ENCODE measurements at regions of chr1 and their contacts with region 1.

Region 1: DNA sequence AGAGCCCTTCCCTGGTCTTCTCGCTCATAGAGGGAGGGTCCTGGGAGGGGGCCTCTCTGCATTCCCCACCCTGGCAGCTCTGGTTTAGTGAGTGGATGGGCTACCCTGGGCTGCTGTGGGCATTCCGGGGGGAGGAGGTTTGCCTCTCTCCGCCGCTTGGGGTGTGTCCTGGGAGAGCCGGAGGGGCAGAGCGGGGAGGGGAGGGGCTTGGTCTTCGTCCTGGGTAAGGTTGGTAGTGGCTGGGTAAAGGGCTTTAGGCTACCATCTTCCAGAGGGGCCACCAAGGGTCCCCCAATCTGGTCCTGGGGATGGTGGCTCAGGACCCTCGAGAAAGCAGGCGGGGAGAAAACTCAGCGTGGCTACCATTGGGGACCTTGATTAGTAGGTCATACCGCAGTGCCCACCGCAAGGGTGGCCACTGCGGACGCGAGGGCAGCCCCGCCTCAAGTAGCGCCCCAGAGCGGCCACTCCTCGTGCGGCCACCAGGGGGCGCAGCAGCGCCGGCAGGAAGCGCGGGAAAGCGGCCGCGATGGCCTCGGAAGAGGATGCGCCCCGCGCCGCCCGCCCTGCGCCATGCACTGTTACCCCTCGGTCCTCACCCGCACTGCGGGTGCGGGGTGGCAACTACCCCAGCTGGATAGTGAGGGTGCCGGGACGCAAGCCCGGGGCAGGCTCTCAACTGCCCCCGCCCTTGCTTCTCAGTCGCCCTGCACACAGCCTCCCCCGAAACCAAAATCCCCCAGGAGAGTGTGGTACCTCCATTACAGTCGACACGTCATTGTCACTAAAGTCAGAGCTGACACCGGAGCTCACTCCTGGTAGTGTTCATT is 44.1 kb upstream of the SLC25A33 start:
- H3K4me3 Mint-ChIP-seq: peak overlapping the region; percentile 34
- H3K27ac Mint-ChIP-seq: no peak overlapping the region
- H3K4me1 Mint-ChIP-seq: peaks cover 7% of the 10 kb centered on the region
- H3K27me3 Mint-ChIP-seq: peaks cover 35% of the 10 kb centered on the region

Region 2: DNA sequence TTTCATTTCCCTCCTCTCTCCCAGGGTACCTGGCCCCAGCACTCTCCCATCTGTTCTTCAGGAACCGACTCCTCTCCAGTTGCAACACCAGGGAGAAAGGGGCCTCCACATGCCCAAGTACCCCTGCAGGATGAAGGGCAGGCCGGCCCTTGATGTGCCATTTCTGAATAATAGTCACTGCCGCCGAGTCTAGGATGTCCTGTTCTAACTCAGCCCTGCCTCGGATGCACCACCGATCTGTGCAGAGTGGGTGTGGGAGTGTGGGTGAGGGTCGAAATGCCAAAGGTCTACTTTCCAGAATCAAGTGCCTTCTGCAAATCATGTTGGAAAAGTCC is 227.8 kb before region 1 on chr1:
- intact Hi-C with region 1: loop called (anchors 1 kb)
- H3K4me3 Mint-ChIP-seq: no peak overlapping the region
- H3K27ac Mint-ChIP-seq: no peak overlapping the region
- H3K4me1 Mint-ChIP-seq: peaks cover 6% of the 10 kb centered on the region
- H3K27me3 Mint-ChIP-seq: no peaks in the 10 kb centered on the region

Region 3: GRCh38 chr1:9289090-9289534 is 206.0 kb before region 1 on chr1:
- intact Hi-C with region 1: loop called (anchors 1 kb)
- H3K4me3 Mint-ChIP-seq: no peak overlapping the region
- H3K27ac Mint-ChIP-seq: no peak overlapping the region
- H3K4me1 Mint-ChIP-seq: peaks cover 21% of the 10 kb centered on the region
- H3K27me3 Mint-ChIP-seq: peaks cover 9% of the 10 kb centered on the region

Region 4: DNA sequence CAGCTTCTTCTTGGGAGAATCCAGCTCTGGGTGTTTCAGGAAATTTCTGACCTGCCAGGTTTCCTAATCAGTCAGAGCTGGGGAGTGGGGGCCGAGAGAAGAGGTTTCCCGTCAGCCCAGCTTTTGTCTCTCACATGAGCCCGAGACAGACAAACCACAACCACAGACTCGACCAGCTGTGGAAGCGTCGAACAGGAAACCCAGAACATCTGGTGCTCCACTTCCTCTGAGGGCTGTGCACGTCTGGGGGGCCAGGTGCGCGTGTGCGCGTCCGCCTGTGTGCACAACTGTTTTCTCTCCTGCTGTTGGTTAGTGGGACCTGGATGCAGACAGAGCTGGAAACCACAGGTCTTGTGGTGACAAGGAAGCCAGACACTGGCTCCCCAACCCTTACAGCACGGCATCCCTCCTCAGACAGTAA is 68.8 kb before region 1 on chr1:
- intact Hi-C with region 1: no loop called
- H3K4me3 Mint-ChIP-seq: no peak overlapping the region
- H3K27ac Mint-ChIP-seq: no peak overlapping the region
- H3K4me1 Mint-ChIP-seq: peaks cover 37% of the 10 kb centered on the region
- H3K27me3 Mint-ChIP-seq: peaks cover 44% of the 10 kb centered on the region

Region 5: DNA sequence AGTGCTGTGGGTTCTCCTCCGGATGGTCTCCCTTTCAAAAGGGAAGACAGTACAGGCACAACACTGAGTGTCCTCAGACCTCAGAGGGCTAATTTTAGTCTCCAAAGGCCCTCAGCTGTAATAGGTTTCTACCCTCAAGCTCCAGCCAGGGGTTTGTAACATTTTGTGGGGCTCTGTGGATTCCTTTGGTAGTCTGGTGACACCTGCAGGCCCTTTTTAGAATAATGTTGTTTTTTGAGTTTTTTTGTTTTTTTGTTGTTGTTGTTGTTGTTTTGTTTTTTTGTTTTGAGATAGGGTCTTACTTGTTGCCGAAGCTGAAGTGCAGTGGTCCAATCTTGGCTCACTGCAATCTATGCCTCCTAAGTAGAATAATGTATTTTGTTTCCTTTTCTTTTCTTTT is 78.6 kb after region 1 on chr1:
- intact Hi-C with region 1: loop called (anchors 1 kb)
- H3K4me3 Mint-ChIP-seq: no peak overlapping the region
- H3K27ac Mint-ChIP-seq: no peak overlapping the region
- H3K4me1 Mint-ChIP-seq: no peaks in the 10 kb centered on the region
- H3K27me3 Mint-ChIP-seq: no peaks in the 10 kb centered on the region

Measured in dendritic cell treated with granulocyte-macrophage colony-stimulating factor and Interleukin-4, amounts not matched to agents 40 ng/mL and 50 ng/mL, for 4 days (primary cell).